ENCODE measurements at regions of chrX and their contacts with region 1.

Region 1: DNA sequence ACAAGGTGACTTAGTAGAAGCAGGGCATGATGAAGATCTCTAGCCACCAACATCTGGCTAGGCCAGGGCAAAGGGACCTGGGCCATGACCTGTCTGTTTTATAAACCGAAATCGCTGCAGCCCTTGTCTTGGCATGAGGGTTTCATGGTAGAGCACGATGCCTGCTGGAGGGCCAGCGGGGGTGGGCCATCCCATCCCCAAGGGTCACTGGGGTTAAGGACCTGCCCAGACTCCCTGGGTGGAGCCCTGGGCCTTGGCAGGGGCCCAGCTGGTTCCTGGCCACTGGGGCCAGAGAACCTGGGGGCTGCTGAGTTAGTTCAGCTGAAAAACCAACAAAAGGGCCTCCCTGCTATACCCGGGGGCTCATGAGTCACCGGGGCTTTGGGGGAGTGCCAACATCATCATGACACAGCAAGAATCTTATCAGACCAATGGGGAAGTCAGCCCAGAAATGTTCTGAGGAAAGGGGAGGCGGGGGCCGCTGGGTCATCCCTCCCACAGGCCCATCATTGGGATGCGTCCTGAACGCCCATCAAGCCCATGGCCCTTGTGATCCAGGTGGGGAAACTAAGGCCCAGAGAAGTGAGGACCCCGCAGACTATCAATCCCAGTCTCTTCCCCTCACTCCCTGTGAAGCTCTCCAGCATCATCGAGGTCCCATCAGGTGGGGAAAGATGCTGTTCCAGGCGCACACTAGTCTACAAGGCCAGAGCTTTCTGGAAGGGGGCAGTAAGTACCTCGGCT is 4.8 kb downstream of the G6PD start:
- DNase-seq: peak; percentile 67 to 96
- H3K4me3 ChIP-seq: peak overlapping the region in 1 of 2 donors; percentile 29
- H3K27ac ChIP-seq: peak overlapping the region; percentile 91 to 92
- H3K4me1 ChIP-seq: peaks cover 10 to 28% of the 10 kb centered on the region in 2 donors
- H3K27me3 ChIP-seq: no peaks in the 10 kb centered on the region
- CTCF ChIP-seq: no peak

Region 2: GRCh38 chrX:153971450-153972367 is 570.2 kb before region 1 on chrX and contains the start of gene HCFC1:
- intact Hi-C with region 1: loop called (anchors 5 kb)
- DNase-seq: peak; percentile 73 to 97
- H3K4me3 ChIP-seq: peak within 1 kb of the TSS; percentile 84 to 91
- H3K27ac ChIP-seq: peak within 1 kb of the TSS; percentile 98 to 99
- H3K4me1 ChIP-seq: peaks cover 12 to 17% of the 10 kb centered on the region in 2 donors
- H3K27me3 ChIP-seq: no peaks in the 10 kb centered on the region
- CTCF ChIP-seq: no peak
- total RNA-seq, gene HCFC1: 91.4 TPM

Region 3: GRCh38 chrX:154082396-154083125 is 459.3 kb before region 1 on chrX:
- intact Hi-C with region 1: no loop called
- DNase-seq: no peak
- H3K4me3 ChIP-seq: no peak overlapping the region
- H3K27ac ChIP-seq: peak overlapping the region; percentile 36
- H3K4me1 ChIP-seq: peaks cover 0 to 9% of the 10 kb centered on the region in 2 donors
- H3K27me3 ChIP-seq: no peaks in the 10 kb centered on the region
- CTCF ChIP-seq: no peak